CD8-positive, alpha-beta T cell (primary cell): ENCODE measurements at regions of chrX and their contacts with region 1.

Region 1: DNA sequence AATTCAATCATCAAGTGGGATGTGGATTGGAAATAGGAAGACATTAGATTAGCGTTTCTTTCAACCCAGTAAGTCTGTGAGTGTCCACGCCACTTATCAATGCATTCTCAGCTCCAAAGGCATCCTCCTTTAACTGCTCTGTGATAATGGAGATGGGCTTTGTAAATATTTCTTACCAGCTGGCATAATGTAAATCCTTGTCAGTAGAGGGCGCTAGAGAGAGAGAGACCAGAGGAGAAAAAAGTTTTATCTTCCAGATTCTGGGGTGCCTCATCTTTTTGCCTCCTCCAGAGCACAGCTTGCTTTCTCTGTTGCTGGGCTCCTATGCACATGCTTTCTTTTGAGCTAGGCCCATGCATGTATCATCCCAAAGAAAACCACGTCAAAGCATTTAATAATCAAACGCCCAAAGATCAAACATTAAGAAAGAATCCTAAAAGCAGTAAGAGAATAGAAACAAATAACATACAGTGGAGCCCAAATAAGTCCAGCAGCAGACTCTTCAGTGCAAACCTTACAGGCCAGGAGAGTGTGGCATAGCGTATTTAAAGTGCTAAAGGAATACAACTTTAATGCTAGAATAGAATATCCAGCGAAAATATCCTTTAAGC is 9.6 kb upstream of the MTMR1 start:
- DNase-seq: peak in 4 of 9 experiments; percentile 23 to 74 (median 48)
- ATAC-seq: peak; percentile 62
- H3K4me3 ChIP-seq: no peak overlapping the region
- H3K4me3 Mint-ChIP-seq: no peak overlapping the region
- H3K27ac ChIP-seq: no peak overlapping the region
- H3K27ac Mint-ChIP-seq: no peak overlapping the region
- H3K4me1 ChIP-seq: peaks cover 10% of the 10 kb centered on the region
- H3K4me1 Mint-ChIP-seq: peaks cover 10% of the 10 kb centered on the region
- H3K27me3 ChIP-seq: no peaks in the 10 kb centered on the region
- H3K27me3 Mint-ChIP-seq: no peaks in the 10 kb centered on the region
- CTCF ChIP-seq: peak; percentile 59

Region 2: GRCh38 chrX:150704030-150704613 is 20.5 kb after region 1 on chrX:
- CTCF ChIA-PET with region 1: interaction called, 33 read pairs
- POLR2A ChIA-PET with region 1: interaction called, 4 read pairs
- intact Hi-C with region 1: no loop called
- DNase-seq: no peak
- ATAC-seq: no peak
- H3K4me3 ChIP-seq: no peak overlapping the region
- H3K4me3 Mint-ChIP-seq: no peak overlapping the region
- H3K27ac ChIP-seq: no peak overlapping the region
- H3K27ac Mint-ChIP-seq: peak overlapping the region; percentile 20
- H3K4me1 ChIP-seq: no peaks in the 10 kb centered on the region
- H3K4me1 Mint-ChIP-seq: peaks cover 51% of the 10 kb centered on the region
- H3K27me3 ChIP-seq: no peaks in the 10 kb centered on the region
- H3K27me3 Mint-ChIP-seq: no peaks in the 10 kb centered on the region
- CTCF ChIP-seq: no peak